ENCODE measurements at regions of chr19 and their contacts with region 1.

Region 1: GRCh38 chr19:13952154-13953035 is at the start of gene DCAF15:
- DNase-seq: peak; percentile 99
- ATAC-seq: peak; percentile 99
- H3K4me3 ChIP-seq: peak within 1 kb of the TSS; percentile 100
- H3K27ac ChIP-seq: peak within 1 kb of the TSS; percentile 82
- H3K4me1 ChIP-seq: peaks cover 11% of the 10 kb centered on the region
- H3K27me3 ChIP-seq: no peaks in the 10 kb centered on the region
- CTCF ChIP-seq: no peak
- EP300 ChIP-seq: no peak
- POLR2A ChIP-seq: peak; percentile 87
- RAD21 ChIP-seq: no peak
- polyA plus RNA-seq, gene DCAF15: 0.16 to 0.58 TPM

Region 2: DNA sequence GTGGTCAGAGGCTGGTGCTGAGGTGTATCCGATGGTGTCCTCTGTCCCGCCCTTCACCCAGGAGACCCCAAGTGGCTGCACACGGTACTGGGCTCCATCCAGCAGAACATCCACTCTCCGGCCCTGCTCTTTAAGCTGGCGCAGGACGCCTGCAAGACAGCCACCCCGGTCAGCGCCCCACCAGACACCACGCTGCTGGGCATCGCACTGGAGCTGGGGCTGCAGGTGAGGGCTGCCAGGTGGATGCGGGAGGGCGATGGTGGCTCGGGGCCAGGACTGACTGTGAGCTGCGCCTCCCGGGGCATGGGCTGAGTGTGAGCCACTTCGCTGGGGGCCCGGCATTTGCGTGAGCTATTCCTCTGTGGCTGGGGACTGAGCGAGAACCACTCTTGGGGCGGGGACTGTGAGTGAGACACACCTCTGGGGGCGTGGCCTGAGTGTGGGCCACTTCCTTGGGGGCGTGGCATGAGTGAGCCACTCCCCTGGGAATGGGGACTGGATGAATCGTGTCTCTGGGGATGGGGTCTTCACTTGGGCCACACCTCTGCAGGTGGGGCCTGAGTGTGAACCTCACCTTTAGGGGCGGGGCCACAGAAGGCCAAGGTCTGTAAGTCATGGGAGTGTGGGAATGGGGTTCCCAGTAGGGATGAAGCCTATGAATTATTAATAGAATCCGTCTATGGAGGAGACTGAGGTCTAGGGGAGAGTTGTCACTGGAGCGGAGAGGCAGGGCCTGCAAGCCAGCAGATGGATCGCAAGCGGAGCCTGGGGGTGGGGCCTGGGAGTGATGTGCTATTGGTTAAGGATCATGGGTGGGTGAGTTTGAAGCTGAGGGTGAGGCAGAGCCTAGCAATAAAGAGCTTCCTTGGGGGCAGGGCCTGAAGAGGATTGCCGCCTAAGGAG is 126.7 kb before region 1 on chr19:
- CTCF ChIA-PET with region 1: no interaction called
- POLR2A ChIA-PET with region 1: no interaction called
- RAD21 ChIA-PET with region 1: no interaction called
- SMC1A ChIA-PET with region 1: no interaction called
- in situ Hi-C with region 1: no loop called
- intact Hi-C with region 1: no loop called
- DNase-seq: no peak
- ATAC-seq: peak; percentile 65
- H3K4me3 ChIP-seq: no peak overlapping the region
- H3K27ac ChIP-seq: no peak overlapping the region
- H3K4me1 ChIP-seq: no peaks in the 10 kb centered on the region
- H3K27me3 ChIP-seq: no peaks in the 10 kb centered on the region
- CTCF ChIP-seq: 0 out of 6 replicates have a peak, but pooled peaks of 2 of the 3 experiments have one; percentile 14 to 19
- EP300 ChIP-seq: no peak
- POLR2A ChIP-seq: no peak; the same call in 1 of the 2 replicates
- RAD21 ChIP-seq: no peak

Region 3: DNA sequence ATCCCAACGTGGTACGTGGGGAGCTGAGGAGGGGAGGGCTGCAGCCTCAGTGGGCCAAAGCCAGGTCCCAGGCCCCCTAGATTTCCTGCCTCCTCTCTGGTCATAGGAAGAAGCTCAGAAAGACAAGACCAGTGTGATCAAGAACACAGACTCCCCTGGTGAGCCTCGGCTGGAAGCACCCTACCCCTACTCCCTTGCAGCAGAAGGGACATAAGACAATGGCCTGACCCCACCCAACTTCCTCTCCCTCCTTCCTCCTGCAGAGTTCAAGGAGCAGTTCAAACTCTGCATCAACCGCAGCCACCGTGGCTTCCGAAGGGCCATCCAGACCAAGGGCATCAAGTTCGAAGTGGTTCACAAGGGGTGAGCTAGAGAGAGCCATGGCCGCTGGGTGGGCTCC is 25.7 kb before region 1 on chr19:
- CTCF ChIA-PET with region 1: no interaction called
- POLR2A ChIA-PET with region 1: no interaction called
- RAD21 ChIA-PET with region 1: no interaction called
- SMC1A ChIA-PET with region 1: no interaction called
- in situ Hi-C with region 1: no loop called
- intact Hi-C with region 1: no loop called
- DNase-seq: no peak
- ATAC-seq: no peak
- H3K4me3 ChIP-seq: no peak overlapping the region
- H3K27ac ChIP-seq: no peak overlapping the region
- H3K4me1 ChIP-seq: no peaks in the 10 kb centered on the region
- H3K27me3 ChIP-seq: no peaks in the 10 kb centered on the region
- CTCF ChIP-seq: no peak
- EP300 ChIP-seq: no peak
- POLR2A ChIP-seq: no peak
- RAD21 ChIP-seq: no peak

Region 4: GRCh38 chr19:13986348-13986904 is 34.0 kb after region 1 on chr19:
- CTCF ChIA-PET with region 1: no interaction called
- POLR2A ChIA-PET with region 1: interaction called, 4 read pairs
- RAD21 ChIA-PET with region 1: interaction called, 6 read pairs
- SMC1A ChIA-PET with region 1: interaction called, 3 read pairs
- in situ Hi-C with region 1: no loop called
- intact Hi-C with region 1: loop called (anchors 5 kb)
- DNase-seq: peak; percentile 93
- ATAC-seq: peak; percentile 97
- H3K4me3 ChIP-seq: peak overlapping the region; percentile 49; the same call in 1 of the 2 replicates
- H3K27ac ChIP-seq: peak overlapping the region; percentile 94
- H3K4me1 ChIP-seq: peaks cover 27% of the 10 kb centered on the region
- H3K27me3 ChIP-seq: no peaks in the 10 kb centered on the region
- CTCF ChIP-seq: no peak
- EP300 ChIP-seq: 0 out of 4 replicates have a peak, but pooled peaks have one; percentile 27 to 47
- POLR2A ChIP-seq: peak; percentile 86
- RAD21 ChIP-seq: peak; percentile 14; the same call in 1 of the 2 replicates

Region 5: DNA sequence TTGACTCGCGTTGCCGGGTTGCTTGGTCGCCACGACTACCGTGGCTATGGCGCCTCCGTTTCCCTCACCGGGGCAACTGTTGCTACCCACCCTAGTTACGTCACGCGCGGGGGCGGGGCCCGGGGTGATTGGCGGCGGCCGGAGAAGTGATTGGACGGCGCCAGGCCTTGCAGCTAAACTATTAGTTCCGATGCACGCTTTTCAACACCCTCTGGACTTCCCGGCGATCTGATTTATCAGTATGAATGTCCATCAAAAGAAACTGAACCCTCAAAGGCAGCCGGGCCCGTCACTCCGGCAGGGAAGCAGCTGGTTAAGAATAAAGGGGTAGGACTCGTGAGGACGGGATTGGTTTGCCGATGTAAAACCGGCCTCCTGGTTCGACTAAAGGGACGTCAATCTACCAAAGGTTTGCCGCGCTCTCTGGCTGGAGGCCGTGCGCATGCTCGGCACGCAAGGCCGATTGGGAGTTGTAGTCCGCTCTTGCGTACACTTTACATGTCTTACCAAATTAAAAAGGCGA is 53.9 kb after region 1 on chr19 and contains the start of gene RFX1:
- CTCF ChIA-PET with region 1: interaction called, 6 read pairs
- POLR2A ChIA-PET with region 1: interaction called, 6 read pairs
- RAD21 ChIA-PET with region 1: interaction called, 17 read pairs
- SMC1A ChIA-PET with region 1: interaction called, 9 read pairs
- in situ Hi-C with region 1: no loop called
- intact Hi-C with region 1: loop called (anchors 1 kb)
- DNase-seq: peak; percentile 99
- ATAC-seq: peak; percentile 86
- H3K4me3 ChIP-seq: peak within 1 kb of the TSS; percentile 79
- H3K27ac ChIP-seq: peak within 1 kb of the TSS; percentile 95
- H3K4me1 ChIP-seq: peaks cover 41% of the 10 kb centered on the region
- H3K27me3 ChIP-seq: no peaks in the 10 kb centered on the region
- CTCF ChIP-seq: no peak
- EP300 ChIP-seq: peak in 1 of 2 experiments; percentile 79; a peak in 1 of 4 replicates
- POLR2A ChIP-seq: no peak
- RAD21 ChIP-seq: no peak
- polyA plus RNA-seq, gene RFX1: 0.05 to 0.29 TPM

Region 6: DNA sequence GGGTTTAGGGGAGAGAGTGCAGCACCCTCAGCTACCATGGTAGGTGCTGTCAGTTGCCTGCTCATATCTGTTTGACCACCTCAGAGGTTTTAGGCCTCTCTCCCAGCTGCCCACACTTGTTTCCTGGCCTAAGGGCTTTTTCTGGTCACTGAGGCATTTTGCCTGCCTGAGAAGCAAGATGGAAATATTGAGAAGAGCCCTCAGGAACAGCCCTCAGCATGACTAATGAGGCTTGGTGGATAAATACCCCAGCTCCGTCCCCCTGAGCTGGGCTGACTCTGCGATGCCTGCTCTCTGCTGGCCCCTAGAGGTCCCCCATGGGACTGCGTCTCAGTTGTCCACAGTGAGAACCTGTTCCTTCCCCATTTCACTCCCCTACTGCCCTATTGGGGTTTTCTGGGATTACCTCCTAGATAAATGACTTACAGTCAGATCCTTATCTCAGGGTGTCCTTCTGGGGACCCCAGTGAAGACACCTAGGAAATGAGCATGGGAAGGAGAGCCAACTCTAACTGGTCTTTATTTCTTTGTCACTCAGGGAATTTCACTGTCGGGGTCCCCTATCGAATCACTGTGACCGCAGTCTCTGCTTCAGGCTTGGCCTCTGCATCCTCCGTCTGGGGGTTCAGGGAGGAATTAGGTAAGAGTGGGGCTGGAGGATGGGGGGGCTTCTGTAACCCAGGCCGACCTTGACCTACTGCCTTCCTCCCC is 96.2 kb after region 1 on chr19:
- CTCF ChIA-PET with region 1: interaction called, 10 read pairs
- POLR2A ChIA-PET with region 1: no interaction called
- RAD21 ChIA-PET with region 1: interaction called, 3 read pairs
- SMC1A ChIA-PET with region 1: no interaction called
- in situ Hi-C with region 1: no loop called
- intact Hi-C with region 1: no loop called
- DNase-seq: no peak
- ATAC-seq: peak; percentile 87
- H3K4me3 ChIP-seq: no peak overlapping the region
- H3K27ac ChIP-seq: no peak overlapping the region
- H3K4me1 ChIP-seq: no peaks in the 10 kb centered on the region
- H3K27me3 ChIP-seq: no peaks in the 10 kb centered on the region
- CTCF ChIP-seq: peak; percentile 73 to 95 (median 92)
- EP300 ChIP-seq: no peak
- POLR2A ChIP-seq: no peak
- RAD21 ChIP-seq: peak; percentile 57

Region 7: GRCh38 chr19:14107581-14108461 is 155.4 kb after region 1 on chr19:
- CTCF ChIA-PET with region 1: no interaction called
- POLR2A ChIA-PET with region 1: no interaction called
- RAD21 ChIA-PET with region 1: no interaction called
- SMC1A ChIA-PET with region 1: no interaction called
- in situ Hi-C with region 1: no loop called
- intact Hi-C with region 1: no loop called
- DNase-seq: no peak
- ATAC-seq: no peak
- H3K4me3 ChIP-seq: no peak overlapping the region
- H3K27ac ChIP-seq: no peak overlapping the region
- H3K4me1 ChIP-seq: no peaks in the 10 kb centered on the region
- H3K27me3 ChIP-seq: no peaks in the 10 kb centered on the region
- CTCF ChIP-seq: no peak
- EP300 ChIP-seq: no peak
- POLR2A ChIP-seq: no peak
- RAD21 ChIP-seq: no peak

Measured in GM12878 (cell line).